Psoas muscle (tissue), 8 donors: ENCODE measurements at regions of chr15 and their contacts with region 1.

Region 1: DNA sequence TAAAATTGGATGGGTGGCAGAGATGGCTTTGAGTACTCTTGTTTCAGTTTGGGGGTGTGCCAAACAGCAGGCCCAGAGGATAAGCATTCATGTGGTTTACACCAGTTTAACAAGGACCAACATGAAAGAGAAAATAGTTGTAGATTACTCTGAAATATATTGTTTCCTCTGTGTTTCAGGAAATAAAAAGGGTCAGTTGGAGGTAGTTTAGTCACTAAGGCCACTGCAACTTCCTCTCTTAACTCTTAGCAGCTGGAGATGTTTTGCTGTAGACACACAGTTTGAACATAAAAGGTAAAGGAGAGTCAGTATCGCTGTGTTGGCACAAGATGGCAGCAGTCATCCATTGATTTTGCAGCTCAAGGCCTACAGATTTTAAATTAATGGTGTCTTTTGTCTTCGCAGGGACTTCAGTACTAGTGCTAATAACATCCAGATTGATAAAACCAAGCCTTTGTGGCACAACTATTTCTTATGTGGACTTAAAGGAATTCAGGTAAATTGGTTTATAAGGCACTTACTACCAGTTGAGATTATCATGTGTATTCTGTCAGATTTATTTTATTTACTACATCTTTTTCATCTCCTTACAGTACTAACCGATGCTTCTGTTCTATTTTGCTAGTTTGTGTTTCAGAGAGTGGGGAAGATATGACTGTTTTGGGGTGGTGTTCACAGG is 65.5 kb downstream of the GALK2 start:
- DNase-seq: peak; percentile 30 to 46
- ATAC-seq: peak; percentile 76 to 95 (median 78)
- H3K4me3 ChIP-seq: no peak overlapping the region
- H3K27ac ChIP-seq: no peak overlapping the region
- H3K4me1 ChIP-seq: no peaks in the 10 kb centered on the region
- H3K27me3 ChIP-seq: no peaks in the 10 kb centered on the region
- CTCF ChIP-seq: peak; percentile 82

Region 2: GRCh38 chr15:49046220-49047102 is 189.1 kb before region 1 on chr15 and contains the start of gene SECISBP2L:
- intact Hi-C with region 1: no loop called
- DNase-seq: peak; percentile 92 to 95
- ATAC-seq: peak; percentile 98 to 99 (median 99)
- H3K4me3 ChIP-seq: peak within 1 kb of the TSS; percentile 95
- H3K27ac ChIP-seq: peak within 1 kb of the TSS; percentile 79
- H3K4me1 ChIP-seq: peaks cover 17% of the 10 kb centered on the region
- H3K27me3 ChIP-seq: no peaks in the 10 kb centered on the region
- CTCF ChIP-seq: no peak
- total RNA-seq, gene SECISBP2L: 22.0 to 31.9 (median 29.4) TPM

Region 3: GRCh38 chr15:50003786-50004334 is 768.3 kb after region 1 on chr15:
- intact Hi-C with region 1: loop called in 1 of 2 experiments (anchors 10 kb)
- DNase-seq: peak; percentile 77 to 88
- ATAC-seq: peak; percentile 43 to 87 (median 74)
- H3K4me3 ChIP-seq: no peak overlapping the region
- H3K27ac ChIP-seq: no peak overlapping the region
- H3K4me1 ChIP-seq: no peaks in the 10 kb centered on the region
- H3K27me3 ChIP-seq: no peaks in the 10 kb centered on the region
- CTCF ChIP-seq: peak; percentile 55

Region 4: DNA sequence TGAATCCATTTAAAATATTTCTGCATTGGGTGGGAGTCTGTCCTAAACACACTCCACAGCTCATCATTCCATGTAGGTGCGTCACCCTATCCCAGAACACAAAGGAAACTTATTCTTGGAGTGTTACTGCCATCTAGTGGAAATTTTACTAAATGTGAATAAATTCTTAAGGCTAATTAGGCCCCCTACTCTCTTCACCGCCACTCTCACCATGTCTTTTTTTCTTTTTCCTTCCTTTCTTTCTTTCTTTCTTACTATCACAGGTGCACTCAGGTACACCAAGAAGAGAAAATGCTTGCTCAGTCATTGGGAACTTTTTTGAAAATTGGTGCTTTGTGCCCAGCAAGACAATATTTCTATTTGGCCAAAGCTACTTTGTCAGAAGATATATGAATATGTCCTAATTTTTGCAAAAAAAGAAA is 909.9 kb after region 1 on chr15:
- intact Hi-C with region 1: loop called (anchors 2 to 10 kb)
- DNase-seq: no peak
- ATAC-seq: peak; percentile 70 to 86 (median 83)
- H3K4me3 ChIP-seq: no peak overlapping the region
- H3K27ac ChIP-seq: no peak overlapping the region
- H3K4me1 ChIP-seq: no peaks in the 10 kb centered on the region
- H3K27me3 ChIP-seq: no peaks in the 10 kb centered on the region
- CTCF ChIP-seq: peak; percentile 56